ENCODE measurements at regions of chr15 and their contacts with region 1.

Region 1: DNA sequence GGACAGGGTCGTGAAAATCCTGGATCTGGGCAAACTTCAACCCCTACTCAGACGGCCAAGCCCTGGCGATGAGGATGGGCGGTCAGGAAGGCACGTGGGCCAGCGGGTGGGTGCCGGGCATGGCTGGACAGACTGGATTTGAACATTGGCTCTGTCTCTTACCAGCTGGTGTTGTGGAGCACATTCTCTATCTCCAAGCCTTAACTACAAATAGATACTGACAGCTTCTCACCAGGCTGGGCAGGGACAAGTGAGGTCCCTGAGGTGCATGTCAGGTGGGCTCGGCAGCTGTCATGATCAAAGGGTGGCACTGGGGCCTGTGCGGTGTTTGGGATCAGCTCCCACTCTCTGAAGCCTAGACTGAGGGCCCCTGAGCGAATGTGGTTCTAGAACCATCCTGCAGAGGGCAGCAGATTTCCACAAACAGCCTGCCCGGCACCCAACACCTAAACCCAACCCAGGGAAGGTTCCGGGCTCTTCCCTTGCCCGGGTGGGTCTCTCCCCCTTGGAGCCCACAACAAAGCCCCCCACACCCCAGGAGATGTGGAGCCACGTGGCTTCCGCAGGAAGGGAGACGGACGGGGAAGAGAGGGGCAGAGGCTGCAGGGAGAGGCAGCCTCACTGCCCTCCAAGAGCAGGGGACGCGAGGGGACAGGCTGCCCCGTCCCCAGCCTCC is 58.4 kb downstream of the RGMA start:
- DNase-seq: peak; percentile 77
- ATAC-seq: peak; percentile 85
- H3K4me3 Mint-ChIP-seq: no peak overlapping the region
- H3K27ac Mint-ChIP-seq: peak overlapping the region; percentile 33
- H3K4me1 Mint-ChIP-seq: peaks cover 20% of the 10 kb centered on the region
- H3K27me3 Mint-ChIP-seq: no peaks in the 10 kb centered on the region

Region 2: DNA sequence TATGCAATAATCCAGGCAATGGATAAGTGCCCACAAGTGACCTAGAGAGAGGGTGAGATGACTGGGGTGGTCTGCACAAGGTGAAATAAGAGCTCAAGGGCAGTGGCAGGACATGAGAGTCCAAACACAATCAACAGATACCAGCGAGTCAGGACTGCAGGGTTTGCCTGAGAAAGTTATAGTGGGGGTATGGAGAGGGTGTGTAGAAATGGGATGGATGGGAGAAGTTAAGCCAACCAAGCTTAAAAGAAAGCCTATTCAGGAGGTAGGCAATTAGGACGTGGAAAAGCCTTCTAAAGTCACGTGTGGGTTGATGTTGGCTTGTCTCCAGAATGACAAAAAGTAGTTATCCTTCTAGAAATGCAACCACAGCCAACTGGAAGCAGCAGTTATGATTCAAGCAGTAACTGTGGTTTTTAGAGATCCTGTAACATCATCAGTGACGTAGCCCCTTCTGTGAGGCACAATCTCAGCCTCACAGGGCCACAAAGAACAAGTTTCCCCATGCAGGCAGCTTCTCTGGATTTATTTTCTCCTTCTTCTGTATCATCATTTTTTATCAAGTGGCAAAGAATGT is 431.1 kb before region 1 on chr15:
- CTCF ChIA-PET with region 1: no interaction called
- POLR2A ChIA-PET with region 1: no interaction called
- DNase-seq: no peak
- ATAC-seq: no peak
- H3K4me3 Mint-ChIP-seq: no peak overlapping the region
- H3K27ac Mint-ChIP-seq: no peak overlapping the region
- H3K4me1 Mint-ChIP-seq: peaks cover 5% of the 10 kb centered on the region
- H3K27me3 Mint-ChIP-seq: no peaks in the 10 kb centered on the region

Region 3: DNA sequence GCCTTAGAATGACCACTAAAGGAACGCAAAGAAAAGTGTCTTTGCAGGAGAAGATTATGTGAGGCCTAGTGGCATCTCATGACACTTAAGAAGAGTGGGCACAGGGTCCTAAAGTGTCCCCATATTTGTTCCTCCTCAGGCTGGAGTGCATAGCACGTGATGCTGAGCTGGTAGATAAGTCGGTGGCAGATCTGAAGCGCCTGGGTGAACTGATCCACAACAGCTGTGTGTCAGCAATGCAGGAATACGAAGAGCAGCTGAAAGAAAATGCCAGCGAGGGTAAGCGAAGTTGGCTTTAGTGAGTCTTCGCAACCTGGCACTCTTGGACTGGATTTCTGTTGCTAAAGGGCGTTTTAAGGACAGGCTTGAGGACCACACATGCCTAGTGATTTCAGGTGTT is 37.8 kb before region 1 on chr15:
- CTCF ChIA-PET with region 1: no interaction called
- POLR2A ChIA-PET with region 1: no interaction called
- DNase-seq: no peak
- ATAC-seq: no peak
- H3K4me3 Mint-ChIP-seq: no peak overlapping the region
- H3K27ac Mint-ChIP-seq: no peak overlapping the region
- H3K4me1 Mint-ChIP-seq: peaks cover 12% of the 10 kb centered on the region
- H3K27me3 Mint-ChIP-seq: no peaks in the 10 kb centered on the region

Region 4: DNA sequence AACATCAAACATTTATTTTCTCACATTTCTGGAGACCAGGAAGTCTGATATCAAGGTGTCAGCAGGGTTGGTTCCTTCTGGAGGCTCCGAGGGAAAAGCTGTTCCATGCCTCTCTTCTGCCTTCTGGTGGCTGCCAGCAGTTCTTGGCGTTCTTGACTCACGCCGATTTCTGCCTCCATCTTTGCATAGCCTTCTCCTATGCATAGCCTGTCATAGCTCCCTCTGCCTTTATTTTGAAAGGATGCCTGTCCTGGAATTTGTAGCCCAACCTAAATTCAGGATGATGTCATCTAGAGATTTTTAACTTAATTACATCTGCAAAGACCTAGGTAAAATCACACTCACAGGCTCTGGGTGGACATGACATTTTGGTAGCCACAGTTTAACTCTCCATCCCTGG is 12.0 kb before region 1 on chr15:
- CTCF ChIA-PET with region 1: interaction called, 17 read pairs
- POLR2A ChIA-PET with region 1: no interaction called
- DNase-seq: no peak
- ATAC-seq: no peak
- H3K4me3 Mint-ChIP-seq: no peak overlapping the region
- H3K27ac Mint-ChIP-seq: no peak overlapping the region
- H3K4me1 Mint-ChIP-seq: peaks cover 36% of the 10 kb centered on the region
- H3K27me3 Mint-ChIP-seq: no peaks in the 10 kb centered on the region

Region 5: GRCh38 chr15:93048759-93049161 is 18.2 kb after region 1 on chr15:
- CTCF ChIA-PET with region 1: interaction called, 10 read pairs
- POLR2A ChIA-PET with region 1: no interaction called
- DNase-seq: no peak
- ATAC-seq: no peak
- H3K4me3 Mint-ChIP-seq: no peak overlapping the region
- H3K27ac Mint-ChIP-seq: no peak overlapping the region
- H3K4me1 Mint-ChIP-seq: peaks cover 20% of the 10 kb centered on the region
- H3K27me3 Mint-ChIP-seq: peaks cover 8% of the 10 kb centered on the region

Region 6: GRCh38 chr15:94119923-94120775 is 1089.6 kb after region 1 on chr15:
- CTCF ChIA-PET with region 1: interaction called, 41 read pairs
- POLR2A ChIA-PET with region 1: no interaction called
- DNase-seq: peak; percentile 75
- ATAC-seq: peak; percentile 99
- H3K4me3 Mint-ChIP-seq: no peak overlapping the region
- H3K27ac Mint-ChIP-seq: no peak overlapping the region
- H3K4me1 Mint-ChIP-seq: no peaks in the 10 kb centered on the region
- H3K27me3 Mint-ChIP-seq: peaks cover 10% of the 10 kb centered on the region